Right ventricle myocardium superior (tissue), 1 donor: ENCODE measurements at regions of chr7 and their contacts with region 1.

Region 1: DNA sequence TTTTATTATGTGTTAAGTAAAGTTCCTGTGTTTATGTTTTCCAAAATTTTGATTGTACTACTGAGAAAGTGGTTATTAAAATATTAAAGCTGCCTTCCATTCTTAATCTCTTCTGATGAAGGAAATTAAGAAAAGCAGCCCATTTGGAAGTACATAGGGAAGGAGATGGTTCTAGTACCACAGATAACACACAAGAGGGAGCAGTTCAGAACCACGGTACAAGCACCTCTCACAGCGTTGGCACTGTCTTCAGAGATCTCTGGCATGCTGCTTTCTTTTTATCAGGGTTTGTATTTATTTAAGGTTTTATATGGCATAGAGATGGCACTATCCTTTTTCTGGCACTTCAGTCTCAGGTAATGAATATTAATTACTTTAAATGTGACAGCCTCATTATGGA is 111.6 kb downstream of the PHTF2 start:
- DNase-seq: no peak
- ATAC-seq: no peak

Region 2: GRCh38 chr7:77667459-77668086 is 242.6 kb before region 1 on chr7:
- intact Hi-C with region 1: loop called (anchors 10 kb)
- DNase-seq: no peak
- ATAC-seq: no peak

Region 3: DNA sequence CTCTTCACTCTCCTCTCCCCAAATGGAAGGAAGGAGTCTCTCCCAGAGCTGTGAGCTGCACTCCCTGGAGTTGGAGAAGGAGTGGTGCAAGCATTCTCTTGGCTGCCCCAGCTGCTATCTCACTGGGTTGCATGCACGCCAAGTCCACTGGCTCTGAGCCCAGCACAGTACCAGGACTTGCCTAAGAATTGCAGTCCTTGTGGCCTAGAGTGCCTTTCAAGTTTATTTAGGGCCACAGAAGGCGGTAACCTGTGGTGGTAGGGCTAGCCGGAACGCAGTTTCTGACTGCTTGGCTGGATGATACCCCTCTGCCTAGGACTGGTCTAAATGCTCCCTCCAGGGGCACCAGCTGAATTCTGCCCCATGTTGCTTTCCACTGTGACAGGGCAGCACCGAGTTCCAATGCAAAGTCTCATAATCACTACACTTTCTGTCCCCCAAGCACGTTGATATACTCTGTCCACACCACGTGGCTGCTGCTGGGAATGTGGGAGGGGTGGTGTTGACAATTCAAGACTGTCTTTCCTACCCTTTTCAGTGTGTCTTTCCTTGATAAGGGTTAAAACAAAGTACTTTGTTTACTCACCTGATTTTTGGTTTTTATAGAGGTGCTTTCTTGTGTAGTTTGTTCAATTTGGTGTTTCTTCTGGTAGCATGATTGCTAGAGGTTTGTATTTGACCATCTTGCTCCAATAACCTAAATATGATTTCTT is 54.6 kb before region 1 on chr7:
- intact Hi-C with region 1: no loop called
- DNase-seq: peak; percentile 81
- ATAC-seq: peak; percentile 92

Region 4: GRCh38 chr7:78039790-78040776 is 130.0 kb after region 1 on chr7:
- intact Hi-C with region 1: no loop called
- DNase-seq: peak; percentile 47
- ATAC-seq: no peak